Right ventricle myocardium inferior (tissue), 1 donor: ENCODE measurements at regions of chr11 and their contacts with region 1.

Region 1: GRCh38 chr11:78645226-78646202 is 70.8 kb upstream of the NARS2 start:
- DNase-seq: peak; percentile 74
- ATAC-seq: peak; percentile 82

Region 2: DNA sequence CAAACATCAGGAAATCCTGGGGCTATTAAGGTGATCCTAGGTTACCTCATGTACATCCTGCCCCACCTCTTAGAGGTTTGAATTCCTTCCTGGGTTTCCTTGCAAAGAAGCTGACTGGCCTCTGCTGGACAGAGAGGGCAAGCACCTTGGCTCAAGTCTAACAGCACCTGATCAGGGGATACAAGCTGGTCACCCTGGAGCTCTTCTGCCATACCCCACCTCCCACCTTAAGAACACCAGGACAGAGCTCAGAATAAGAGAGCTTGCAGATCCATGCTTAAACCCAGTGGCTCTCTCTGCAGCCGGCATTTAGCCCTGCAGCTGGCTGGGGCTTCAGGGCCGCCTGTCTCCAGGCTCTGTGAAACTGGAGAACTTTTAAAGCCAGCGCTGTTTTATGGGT is 315.7 kb after region 1 on chr11:
- intact Hi-C with region 1: loop called (anchors 2 kb)
- DNase-seq: no peak
- ATAC-seq: peak; percentile 60

Region 3: GRCh38 chr11:79076526-79077115 is 431.1 kb after region 1 on chr11:
- intact Hi-C with region 1: loop called (anchors 5 kb)
- DNase-seq: no peak
- ATAC-seq: no peak

Region 4: GRCh38 chr11:79100093-79100910 is 454.8 kb after region 1 on chr11:
- intact Hi-C with region 1: loop called (anchors 5 kb)
- DNase-seq: no peak
- ATAC-seq: peak; percentile 44